H1 (cell line): ENCODE measurements at regions of chr14 and their contacts with region 1.

Region 1: DNA sequence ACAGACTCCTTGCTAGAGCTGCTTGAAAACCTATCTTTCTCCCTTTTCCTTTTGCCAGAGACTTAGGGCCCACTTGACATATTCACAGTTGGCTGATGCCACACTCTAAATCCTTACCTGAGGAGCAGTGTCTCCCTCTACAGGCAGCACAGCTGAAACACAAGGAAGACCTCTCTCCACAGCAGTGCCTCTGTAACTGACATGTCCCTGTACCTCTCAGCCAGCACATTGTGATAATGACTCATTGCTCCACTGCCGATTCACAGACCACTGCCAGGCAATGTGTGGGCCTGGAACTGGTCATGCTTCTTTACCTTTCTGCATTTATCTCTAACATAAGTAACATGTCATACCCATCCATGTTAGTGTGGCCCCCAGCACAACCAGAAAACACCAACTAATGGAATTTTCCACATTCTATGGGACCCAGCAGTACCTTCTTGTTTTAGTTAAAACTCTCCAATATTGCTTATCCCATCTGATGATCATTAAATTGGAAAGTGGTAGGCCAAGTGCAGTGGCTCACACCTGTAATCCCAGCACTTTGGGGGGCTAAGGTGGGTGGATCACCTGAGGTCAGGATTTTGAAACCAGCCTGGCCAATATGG is 56.5 kb downstream of the GTF2A1 start:
- DNase-seq: peak; percentile 63 to 77
- H3K4me3 ChIP-seq: no peak overlapping the region
- H3K27ac ChIP-seq: no peak overlapping the region
- H3K4me1 ChIP-seq: peaks cover 0 to 2% (median 0%) of the 10 kb centered on the region in 4 experiments; a peak in 1 of 7 replicates
- H3K27me3 ChIP-seq: no peaks in the 10 kb centered on the region
- CTCF ChIP-seq: peak; percentile 71 to 99 (median 92)
- EP300 ChIP-seq: no peak
- POLR2A ChIP-seq: no peak
- RAD21 ChIP-seq: peak; percentile 88 to 92

Region 2: DNA sequence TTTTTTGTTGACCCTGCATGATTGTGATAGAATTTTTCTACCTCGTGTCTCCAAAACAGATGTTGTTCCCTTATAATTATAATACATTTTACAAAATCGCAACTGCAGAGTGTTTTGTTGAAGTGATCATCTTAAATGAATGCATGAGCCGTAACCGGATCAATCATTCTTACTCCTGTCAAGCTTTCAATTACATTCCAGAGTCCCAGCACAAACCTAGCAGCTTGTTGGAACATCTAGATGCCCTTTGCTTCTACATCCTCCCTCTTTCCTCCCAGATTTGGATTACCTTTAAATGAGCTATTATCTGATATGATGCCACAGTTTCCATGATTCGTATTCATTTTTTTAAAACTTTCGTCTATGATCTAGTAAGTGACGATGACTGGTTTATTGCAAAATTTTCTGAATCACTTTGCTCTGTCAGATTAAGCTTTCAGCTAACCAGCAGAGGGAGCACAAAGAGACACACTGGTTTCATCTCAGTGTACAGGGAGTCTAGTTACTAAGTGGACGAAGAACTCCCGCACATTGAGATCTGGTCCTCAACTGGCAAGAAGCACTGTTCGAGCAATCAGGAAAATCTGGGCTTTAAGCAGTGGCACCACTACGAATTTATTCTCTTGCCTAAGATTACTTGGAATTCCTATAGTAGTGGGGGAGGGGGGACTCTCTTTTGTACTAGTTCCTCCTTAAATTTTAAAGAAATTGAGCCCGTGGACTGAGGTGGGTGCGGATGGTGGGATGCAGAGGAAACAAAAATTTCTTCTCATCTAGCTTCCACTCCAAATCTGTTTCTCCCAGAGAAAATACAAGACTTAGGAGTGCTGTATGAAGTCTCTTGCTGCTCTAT is 168.0 kb before region 1 on chr14:
- CTCF ChIA-PET with region 1: interaction called, 50 read pairs
- POLR2A ChIA-PET with region 1: no interaction called
- DNase-seq: no peak
- H3K4me3 ChIP-seq: no peak overlapping the region
- H3K27ac ChIP-seq: no peak overlapping the region
- H3K4me1 ChIP-seq: no peaks in the 10 kb centered on the region
- H3K27me3 ChIP-seq: no peaks in the 10 kb centered on the region
- CTCF ChIP-seq: peak in 2 of 3 experiments; percentile 38 to 46; a peak in 3 of 4 replicates
- EP300 ChIP-seq: no peak
- POLR2A ChIP-seq: no peak
- RAD21 ChIP-seq: peak; percentile 34 to 35

Region 3: GRCh38 chr14:81147140-81147897 is 17.0 kb before region 1 on chr14:
- CTCF ChIA-PET with region 1: interaction called, 36 read pairs
- POLR2A ChIA-PET with region 1: interaction called, 3 read pairs
- DNase-seq: no peak
- H3K4me3 ChIP-seq: no peak overlapping the region
- H3K27ac ChIP-seq: no peak overlapping the region
- H3K4me1 ChIP-seq: no peaks in the 10 kb centered on the region
- H3K27me3 ChIP-seq: no peaks in the 10 kb centered on the region
- CTCF ChIP-seq: no peak
- EP300 ChIP-seq: no peak
- POLR2A ChIP-seq: no peak
- RAD21 ChIP-seq: no peak

Region 4: DNA sequence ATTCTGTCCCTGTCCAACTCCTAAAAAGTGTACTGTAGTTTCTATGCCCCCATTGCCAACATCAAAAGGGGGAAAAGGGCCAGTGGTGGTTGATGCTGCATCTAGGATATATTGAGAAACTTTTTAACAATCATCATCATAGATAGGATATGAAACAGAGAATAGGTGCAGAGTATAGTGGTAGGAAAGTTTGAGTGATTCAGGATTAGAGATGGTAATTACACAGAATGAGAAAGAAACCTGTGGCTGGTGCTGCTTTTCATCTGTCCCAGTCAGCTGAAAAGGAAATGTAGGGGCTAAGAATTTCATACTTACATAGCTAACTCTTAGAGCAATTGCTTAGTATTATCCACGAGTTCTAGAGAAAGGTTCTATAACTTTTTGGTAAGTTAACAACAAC is 11.1 kb before region 1 on chr14:
- CTCF ChIA-PET with region 1: interaction called, 65 read pairs
- POLR2A ChIA-PET with region 1: no interaction called
- DNase-seq: no peak
- H3K4me3 ChIP-seq: no peak overlapping the region
- H3K27ac ChIP-seq: no peak overlapping the region
- H3K4me1 ChIP-seq: no peaks in the 10 kb centered on the region
- H3K27me3 ChIP-seq: no peaks in the 10 kb centered on the region
- CTCF ChIP-seq: no peak
- EP300 ChIP-seq: no peak
- POLR2A ChIP-seq: no peak
- RAD21 ChIP-seq: no peak

Region 5: DNA sequence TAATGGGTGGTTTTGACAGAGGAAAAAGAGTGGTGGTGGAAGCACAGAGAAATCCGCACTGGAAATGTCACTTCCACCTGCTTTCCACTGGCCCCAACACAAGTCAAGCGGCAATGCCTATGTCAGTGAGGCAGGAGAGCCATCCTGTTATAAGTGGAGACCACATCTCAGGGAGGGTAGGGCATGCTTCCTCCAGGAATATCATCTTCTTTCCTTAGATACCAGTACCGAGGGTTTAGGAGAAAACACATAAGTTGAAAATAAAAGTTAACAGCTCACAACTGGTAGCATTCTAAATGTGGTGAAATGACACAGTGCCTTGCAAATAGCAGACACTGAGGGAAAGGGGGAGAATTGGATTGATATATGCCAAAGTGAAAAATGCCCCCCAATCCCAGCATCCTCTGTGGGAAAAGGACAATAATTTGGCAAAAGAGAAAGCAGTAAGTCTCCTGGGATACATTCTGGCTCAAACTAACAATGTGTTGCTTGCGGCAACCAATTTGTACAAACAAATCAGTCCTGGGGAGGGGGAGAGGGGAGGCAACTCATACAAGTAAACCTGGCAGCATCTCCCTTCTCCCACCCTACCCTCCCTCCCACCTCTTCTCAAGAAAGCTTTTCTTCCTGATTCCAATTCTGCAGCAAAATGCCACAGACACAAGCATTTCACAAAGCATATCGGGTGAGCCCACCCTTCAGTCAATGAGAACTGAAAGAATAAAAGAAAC is 178.7 kb after region 1 on chr14:
- CTCF ChIA-PET with region 1: no interaction called
- POLR2A ChIA-PET with region 1: no interaction called
- DNase-seq: no peak
- H3K4me3 ChIP-seq: no peak overlapping the region
- H3K27ac ChIP-seq: no peak overlapping the region
- H3K4me1 ChIP-seq: no peaks in the 10 kb centered on the region; a peak in 1 of 7 replicates
- H3K27me3 ChIP-seq: no peaks in the 10 kb centered on the region
- CTCF ChIP-seq: no peak
- EP300 ChIP-seq: no peak
- POLR2A ChIP-seq: no peak
- RAD21 ChIP-seq: no peak